B cell (primary cell): ENCODE measurements at regions of chr17 and their contacts with region 1.

Region 1: GRCh38 chr17:29617125-29617480 is 5.6 kb downstream of the CORO6 start:
- DNase-seq: peak; percentile 90
- ATAC-seq: peak; percentile 71
- H3K4me3 ChIP-seq: peak overlapping the region in 4 of 5 experiments; percentile 37 to 73 (median 53)
- H3K4me3 Mint-ChIP-seq: peak overlapping the region; percentile 90
- H3K27ac ChIP-seq: no peak overlapping the region
- H3K27ac Mint-ChIP-seq: peak overlapping the region; percentile 64
- H3K4me1 ChIP-seq: peaks cover 56 to 61% of the 10 kb centered on the region in 2 donors
- H3K4me1 Mint-ChIP-seq: peaks cover 47% of the 10 kb centered on the region
- H3K27me3 ChIP-seq: peaks cover 0 to 40% (median 12%) of the 10 kb centered on the region in 4 experiments
- H3K27me3 Mint-ChIP-seq: peaks cover 5% of the 10 kb centered on the region
- CTCF ChIP-seq: peak; percentile 76

Region 2: GRCh38 chr17:29568331-29569244 is 48.5 kb before region 1 on chr17 and contains the start of gene TP53I13:
- CTCF ChIA-PET with region 1: interaction called, 336 read pairs
- POLR2A ChIA-PET with region 1: interaction called, 6 read pairs
- intact Hi-C with region 1: loop called (anchors 1 kb)
- DNase-seq: peak; percentile 92
- ATAC-seq: peak; percentile 60
- H3K4me3 ChIP-seq: peak within 1 kb of the TSS; percentile 71 to 99 (median 80)
- H3K4me3 Mint-ChIP-seq: peak within 1 kb of the TSS; percentile 99
- H3K27ac ChIP-seq: peak within 1 kb of the TSS; percentile 71 to 76
- H3K27ac Mint-ChIP-seq: peak within 1 kb of the TSS; percentile 97
- H3K4me1 ChIP-seq: peaks cover 27 to 40% of the 10 kb centered on the region in 2 donors
- H3K4me1 Mint-ChIP-seq: peaks cover 39% of the 10 kb centered on the region
- H3K27me3 ChIP-seq: no peaks in the 10 kb centered on the region
- H3K27me3 Mint-ChIP-seq: no peaks in the 10 kb centered on the region
- CTCF ChIP-seq: no peak
- total RNA-seq, gene TP53I13: 220 and 224 TPM in 2 replicates

Region 3: DNA sequence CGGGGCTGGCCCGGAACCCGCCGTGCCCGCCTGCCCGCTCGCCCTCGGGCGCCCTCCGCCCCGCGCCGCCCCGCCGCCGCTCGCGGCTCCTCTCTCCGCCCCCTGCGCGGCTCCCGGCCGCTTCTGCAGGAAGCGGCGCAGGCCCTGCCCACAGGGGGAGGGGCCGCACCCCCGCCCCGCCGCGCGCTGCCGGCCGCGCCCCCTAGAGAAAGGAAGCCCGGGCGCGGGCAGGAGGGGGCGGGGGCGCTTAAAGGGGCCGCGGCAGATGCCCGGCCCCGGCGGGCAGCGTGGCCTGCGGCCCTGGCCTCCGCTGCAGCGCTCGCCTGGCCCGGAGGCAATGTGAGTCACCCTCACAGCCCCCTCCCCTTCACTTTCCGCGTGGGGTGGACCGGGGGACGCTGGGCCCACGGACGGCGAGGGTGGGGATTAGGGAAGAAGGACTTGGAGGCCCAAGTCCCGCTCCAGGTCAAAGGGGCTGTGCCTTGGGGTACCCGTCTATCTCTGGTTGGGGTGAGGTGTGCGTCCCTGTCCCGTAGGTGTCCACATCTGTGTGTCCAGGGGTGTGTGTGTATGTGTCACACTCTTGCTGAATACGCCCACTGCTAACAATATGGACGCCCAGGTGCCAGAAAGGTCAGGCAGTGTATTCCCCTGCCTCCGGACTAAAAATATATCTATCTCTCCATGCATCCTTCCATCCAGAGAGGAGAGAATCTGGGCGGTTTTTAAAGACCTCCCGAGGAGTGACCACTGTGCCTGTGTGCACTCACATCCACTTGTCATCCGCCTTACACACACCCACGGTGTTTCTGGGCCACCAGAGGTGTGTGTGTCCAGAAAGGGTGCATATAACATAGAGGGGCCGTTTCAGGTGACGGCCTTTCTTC is 27.3 kb before region 1 on chr17 and contains the start of gene GIT1:
- CTCF ChIA-PET with region 1: interaction called, 336 read pairs
- POLR2A ChIA-PET with region 1: interaction called, 9 read pairs
- intact Hi-C with region 1: loop called (anchors 1 kb)
- DNase-seq: peak; percentile 90
- ATAC-seq: peak; percentile 82
- H3K4me3 ChIP-seq: peak within 1 kb of the TSS; percentile 58 to 96 (median 69)
- H3K4me3 Mint-ChIP-seq: peak within 1 kb of the TSS; percentile 91
- H3K27ac ChIP-seq: peak within 1 kb of the TSS; percentile 46 to 51
- H3K27ac Mint-ChIP-seq: peak within 1 kb of the TSS; percentile 94
- H3K4me1 ChIP-seq: peaks cover 62 to 75% of the 10 kb centered on the region in 2 donors
- H3K4me1 Mint-ChIP-seq: peaks cover 69% of the 10 kb centered on the region
- H3K27me3 ChIP-seq: peaks cover 0 to 7% (median 2%) of the 10 kb centered on the region in 4 experiments
- H3K27me3 Mint-ChIP-seq: no peaks in the 10 kb centered on the region
- CTCF ChIP-seq: no peak
- total RNA-seq, gene GIT1: 61.9 and 66.3 TPM in 2 replicates

Region 4: DNA sequence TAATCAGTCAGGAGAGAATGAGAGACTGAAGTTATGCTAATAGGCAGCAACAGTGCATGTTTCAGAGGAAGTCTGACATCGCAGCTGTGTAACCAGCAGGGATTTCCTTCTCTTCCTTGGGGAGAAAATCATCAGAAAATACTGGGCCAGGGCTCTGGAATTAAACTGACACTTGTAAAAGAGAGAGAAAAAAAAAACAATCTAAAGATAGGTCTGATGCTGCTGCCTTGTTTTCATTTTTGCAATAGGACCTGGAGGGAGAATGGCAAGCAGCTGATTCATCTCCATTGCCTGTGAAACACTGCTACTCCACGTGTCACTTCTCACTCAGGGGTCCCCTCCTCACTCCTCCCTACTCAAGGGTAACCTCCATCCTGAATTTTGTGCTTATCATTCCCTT is 23.3 kb after region 1 on chr17:
- CTCF ChIA-PET with region 1: interaction called, 42 read pairs
- POLR2A ChIA-PET with region 1: interaction called, 5 read pairs
- intact Hi-C with region 1: loop called (anchors 2 kb)
- DNase-seq: no peak
- ATAC-seq: no peak
- H3K4me3 ChIP-seq: no peak overlapping the region
- H3K4me3 Mint-ChIP-seq: no peak overlapping the region
- H3K27ac ChIP-seq: peak overlapping the region in 1 of 2 donors; percentile 64
- H3K27ac Mint-ChIP-seq: peak overlapping the region; percentile 65
- H3K4me1 ChIP-seq: peaks cover 15 to 19% of the 10 kb centered on the region in 2 donors
- H3K4me1 Mint-ChIP-seq: peaks cover 32% of the 10 kb centered on the region
- H3K27me3 ChIP-seq: no peaks in the 10 kb centered on the region
- H3K27me3 Mint-ChIP-seq: no peaks in the 10 kb centered on the region
- CTCF ChIP-seq: no peak

Region 5: GRCh38 chr17:29722411-29723198 is 105.5 kb after region 1 on chr17:
- CTCF ChIA-PET with region 1: interaction called, 18 read pairs
- POLR2A ChIA-PET with region 1: interaction called, 3 read pairs
- intact Hi-C with region 1: no loop called
- DNase-seq: peak; percentile 93
- ATAC-seq: peak; percentile 83
- H3K4me3 ChIP-seq: peak overlapping the region in 4 of 5 experiments; percentile 31 to 44 (median 37)
- H3K4me3 Mint-ChIP-seq: peak overlapping the region; percentile 78
- H3K27ac ChIP-seq: peak overlapping the region; percentile 81 to 94
- H3K27ac Mint-ChIP-seq: peak overlapping the region; percentile 91
- H3K4me1 ChIP-seq: peaks cover 91% of the 10 kb centered on the region in 2 donors
- H3K4me1 Mint-ChIP-seq: peaks cover 85% of the 10 kb centered on the region
- H3K27me3 ChIP-seq: no peaks in the 10 kb centered on the region
- H3K27me3 Mint-ChIP-seq: no peaks in the 10 kb centered on the region
- CTCF ChIP-seq: no peak

Region 6: DNA sequence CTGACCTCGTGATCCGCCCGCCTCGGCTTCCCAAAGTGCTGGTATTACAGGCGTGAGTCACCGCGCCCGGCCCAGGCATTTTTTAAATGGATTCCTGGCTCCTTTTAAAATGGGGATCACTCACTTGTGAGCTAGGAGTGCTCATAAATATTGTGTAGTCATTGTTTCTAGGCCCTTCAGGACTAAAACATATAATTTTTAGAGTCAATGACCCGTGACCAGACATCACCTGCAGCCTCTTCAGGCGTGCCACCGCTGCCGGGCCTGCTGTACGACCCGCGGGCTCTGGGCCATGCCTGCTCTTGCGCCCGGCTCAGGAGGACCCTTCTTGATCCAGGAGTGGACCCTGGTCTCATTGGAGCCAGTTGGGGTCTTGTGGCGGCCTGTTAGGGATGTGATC is 355.2 kb after region 1 on chr17:
- CTCF ChIA-PET with region 1: no interaction called
- POLR2A ChIA-PET with region 1: no interaction called
- intact Hi-C with region 1: no loop called
- DNase-seq: no peak
- ATAC-seq: no peak
- H3K4me3 ChIP-seq: no peak overlapping the region
- H3K4me3 Mint-ChIP-seq: no peak overlapping the region
- H3K27ac ChIP-seq: no peak overlapping the region
- H3K27ac Mint-ChIP-seq: no peak overlapping the region
- H3K4me1 ChIP-seq: peaks cover 0 to 4% of the 10 kb centered on the region in 2 donors
- H3K4me1 Mint-ChIP-seq: peaks cover 4% of the 10 kb centered on the region
- H3K27me3 ChIP-seq: no peaks in the 10 kb centered on the region
- H3K27me3 Mint-ChIP-seq: no peaks in the 10 kb centered on the region
- CTCF ChIP-seq: no peak